ENCODE measurements at regions of chr10 and their contacts with region 1.

Region 1: GRCh38 chr10:73471226-73471625 is 24.6 kb downstream of the PPP3CB start:
- DNase-seq: no peak
- ATAC-seq: no peak
- H3K4me3 ChIP-seq: no peak overlapping the region
- H3K27ac ChIP-seq: no peak overlapping the region
- H3K4me1 ChIP-seq: no peaks in the 10 kb centered on the region
- H3K27me3 ChIP-seq: no peaks in the 10 kb centered on the region
- CTCF ChIP-seq: no peak
- POLR2A ChIP-seq: no peak
- RAD21 ChIP-seq: no peak

Region 2: GRCh38 chr10:73486596-73486995 is 15.4 kb after region 1 on chr10:
- CTCF ChIA-PET with region 1: interaction called, 3 read pairs
- POLR2A ChIA-PET with region 1: interaction called, 22 read pairs
- dilution Hi-C with region 1: no loop called
- in situ Hi-C with region 1: no loop called
- intact Hi-C with region 1: no loop called
- DNase-seq: no peak
- ATAC-seq: no peak
- H3K4me3 ChIP-seq: no peak overlapping the region
- H3K27ac ChIP-seq: no peak overlapping the region
- H3K4me1 ChIP-seq: peaks cover 1% of the 10 kb centered on the region; the same call in 1 of the 2 replicates
- H3K27me3 ChIP-seq: no peaks in the 10 kb centered on the region
- CTCF ChIP-seq: no peak
- POLR2A ChIP-seq: no peak
- RAD21 ChIP-seq: no peak